PC-3 (cell line): ENCODE measurements at regions of chr15 and their contacts with region 1.

Region 1: DNA sequence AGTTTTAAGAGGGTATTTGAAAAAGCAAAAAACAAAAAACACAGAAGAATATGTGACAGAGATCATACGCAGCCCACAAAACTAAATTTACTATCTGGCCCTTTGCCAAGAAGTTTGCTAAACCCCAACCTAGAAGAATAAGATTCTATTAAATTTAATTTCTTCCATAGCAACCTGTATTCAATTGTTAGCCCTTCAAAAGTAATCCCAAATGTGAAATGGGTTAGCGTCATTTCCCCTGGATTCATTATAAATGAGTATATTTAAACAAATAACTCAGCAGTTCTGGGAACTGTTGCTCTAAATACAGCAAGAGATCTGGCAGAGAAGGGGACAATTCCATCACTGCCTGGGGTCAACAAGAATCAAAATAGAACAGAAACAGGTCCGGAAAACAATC is 56.8 kb downstream of the CERS3 start:
- DNase-seq: no peak
- ATAC-seq: no peak
- H3K4me3 ChIP-seq: no peak overlapping the region
- H3K27ac ChIP-seq: no peak overlapping the region
- H3K4me1 ChIP-seq: no peaks in the 10 kb centered on the region
- H3K27me3 ChIP-seq: peaks cover 44% of the 10 kb centered on the region
- CTCF ChIP-seq: no peak

Region 2: GRCh38 chr15:100405179-100405578 is 66.8 kb before region 1 on chr15:
- CTCF ChIA-PET with region 1: no interaction called
- POLR2A ChIA-PET with region 1: interaction called, 16 read pairs
- intact Hi-C with region 1: no loop called
- DNase-seq: no peak
- ATAC-seq: no peak
- H3K4me3 ChIP-seq: no peak overlapping the region
- H3K27ac ChIP-seq: no peak overlapping the region
- H3K4me1 ChIP-seq: no peaks in the 10 kb centered on the region
- H3K27me3 ChIP-seq: peaks cover 44% of the 10 kb centered on the region
- CTCF ChIP-seq: no peak